Aorta (tissue), 5 donors: ENCODE measurements at regions of chr1 and their contacts with region 1.

Region 1: GRCh38 chr1:230215031-230215430 is 148.0 kb downstream of the GALNT2 start:
- DNase-seq: peak; percentile 68 to 86
- ATAC-seq: peak; percentile 77
- H3K4me3 ChIP-seq: no peak overlapping the region
- H3K27ac ChIP-seq: peak overlapping the region; percentile 72 to 90
- H3K4me1 ChIP-seq: peaks cover 0 to 8% of the 10 kb centered on the region in 2 donors
- H3K27me3 ChIP-seq: no peaks in the 10 kb centered on the region

Region 2: GRCh38 chr1:229836324-229836723 is 378.7 kb before region 1 on chr1:
- intact Hi-C with region 1: loop called in 1 of 2 experiments (anchors 10 kb)
- DNase-seq: no peak
- ATAC-seq: no peak
- H3K4me3 ChIP-seq: no peak overlapping the region
- H3K27ac ChIP-seq: no peak overlapping the region
- H3K4me1 ChIP-seq: no peaks in the 10 kb centered on the region
- H3K27me3 ChIP-seq: no peaks in the 10 kb centered on the region

Region 3: DNA sequence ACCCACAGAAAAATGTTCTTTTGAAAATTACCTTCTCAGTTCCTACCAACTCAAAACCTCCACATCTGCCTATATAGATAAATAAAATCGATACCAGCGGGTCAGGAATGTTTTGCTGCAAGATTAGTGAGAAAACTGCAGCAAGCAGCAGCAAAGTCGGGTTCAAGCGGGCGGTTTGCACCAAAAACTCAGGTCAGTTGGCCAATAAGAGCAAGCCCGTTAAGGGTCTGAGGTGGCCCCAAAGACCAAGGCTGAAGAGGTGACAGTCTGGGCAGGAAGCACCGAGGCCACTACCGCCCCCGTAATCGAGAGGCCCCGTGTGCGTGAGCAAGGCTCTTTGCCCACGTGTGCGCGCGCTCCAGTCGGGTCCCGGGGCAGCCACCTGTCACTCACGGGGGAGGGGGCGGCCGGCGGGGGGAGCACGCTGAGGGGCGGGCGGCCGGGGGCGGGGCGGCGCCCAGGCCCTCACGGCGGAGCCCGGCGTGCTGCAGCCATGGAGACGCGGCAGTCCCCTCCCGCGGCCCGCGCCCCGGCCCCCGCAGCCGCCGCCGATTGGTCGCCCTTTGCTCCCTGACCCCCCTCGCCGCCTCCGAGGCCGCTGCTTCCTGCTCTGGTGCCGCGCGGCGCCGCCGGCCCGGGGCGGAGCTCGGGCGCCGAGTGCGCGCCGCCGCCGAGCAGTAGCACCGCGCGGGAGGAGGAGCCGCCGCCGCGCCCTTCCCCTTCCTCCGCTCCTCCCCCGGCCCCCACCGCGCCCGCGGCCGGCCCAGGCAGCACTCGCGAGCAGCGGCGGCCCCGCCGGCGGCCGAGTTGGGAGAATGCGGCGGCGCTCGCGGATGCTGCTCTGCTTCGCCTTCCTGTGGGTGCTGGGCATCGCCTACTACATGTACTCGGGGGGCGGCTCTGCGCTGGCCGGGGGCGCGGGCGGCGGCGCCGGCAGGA is 148.3 kb before region 1 on chr1 and contains the start of gene GALNT2:
- intact Hi-C with region 1: loop called (anchors 5 kb)
- DNase-seq: peak; percentile 93 to 96
- ATAC-seq: peak; percentile 94
- H3K4me3 ChIP-seq: peak within 1 kb of the TSS; percentile 77 to 96
- H3K27ac ChIP-seq: peak within 1 kb of the TSS; percentile 81 to 87
- H3K4me1 ChIP-seq: no peaks in the 10 kb centered on the region
- H3K27me3 ChIP-seq: no peaks in the 10 kb centered on the region
- total RNA-seq, gene GALNT2: 109 to 116 TPM

Region 4: GRCh38 chr1:230104395-230105244 is 110.4 kb before region 1 on chr1:
- intact Hi-C with region 1: loop called (anchors 5 to 10 kb)
- DNase-seq: peak; percentile 98 to 100
- ATAC-seq: peak; percentile 91
- H3K4me3 ChIP-seq: no peak overlapping the region
- H3K27ac ChIP-seq: peak overlapping the region; percentile 18 to 99
- H3K4me1 ChIP-seq: peaks cover 8 to 15% of the 10 kb centered on the region in 2 donors
- H3K27me3 ChIP-seq: no peaks in the 10 kb centered on the region